ENCODE measurements at regions of chrX and their contacts with region 1.

Region 1: DNA sequence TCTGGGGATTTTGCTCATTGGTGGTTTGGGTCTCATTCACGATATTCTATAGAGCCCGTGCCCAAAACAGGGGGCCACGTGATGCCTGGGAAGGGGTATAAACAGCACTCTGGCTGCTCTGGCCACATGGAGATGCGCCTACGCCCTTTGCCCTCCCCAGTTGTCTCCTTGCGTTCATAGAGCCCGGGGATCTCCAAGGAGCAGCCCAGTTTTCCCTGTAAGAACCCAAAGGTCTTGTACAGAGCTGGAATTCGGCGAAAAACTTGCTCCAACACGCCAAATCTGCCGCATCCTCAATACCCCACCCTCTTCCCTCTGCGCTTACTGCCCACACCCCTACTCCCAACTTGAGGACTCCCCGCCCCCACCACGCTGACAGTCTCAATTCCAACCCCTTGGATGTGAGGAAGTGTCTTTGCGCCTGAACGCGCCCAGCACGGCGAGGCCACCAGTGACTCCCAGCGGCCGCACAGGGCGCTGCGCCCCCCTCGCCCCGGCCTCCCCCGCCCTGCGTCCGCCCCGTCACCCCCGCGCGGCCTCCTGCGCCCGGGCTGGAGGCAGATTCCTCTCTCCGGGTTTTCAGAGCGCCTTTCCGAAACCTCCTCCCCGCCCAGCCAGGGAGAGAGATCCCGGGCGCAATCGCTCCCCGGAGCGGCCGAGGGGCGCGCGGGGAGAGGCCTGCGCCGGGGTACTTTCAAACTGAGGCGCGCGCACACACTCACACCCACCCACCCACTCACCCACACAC is at the start of gene NHS:
- DNase-seq: peak; percentile 80
- ATAC-seq: peak; percentile 91
- total RNA-seq, gene NHS: 2.8 TPM

Region 2: DNA sequence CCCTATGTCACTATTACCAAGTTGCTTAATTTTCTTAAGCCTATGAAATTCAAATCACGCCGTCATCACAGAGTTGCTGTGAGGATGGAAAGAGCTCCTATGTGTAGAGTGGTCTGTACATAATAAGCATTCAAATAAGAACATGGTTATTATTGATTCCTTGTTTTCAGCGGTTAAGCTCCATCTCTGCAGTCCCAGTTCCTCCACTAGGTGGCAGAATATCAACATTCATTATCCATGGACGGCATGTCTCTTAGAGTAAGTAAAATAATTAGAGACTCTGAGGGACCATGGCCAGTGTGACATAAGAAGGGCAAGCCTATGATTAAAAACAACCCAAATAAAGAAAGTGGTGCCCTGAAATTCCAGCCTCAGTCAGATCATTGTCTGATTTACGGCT is 132.3 kb before region 1 on chrX:
- intact Hi-C with region 1: loop called (anchors 10 kb)
- DNase-seq: no peak
- ATAC-seq: no peak

Region 3: GRCh38 chrX:17527135-17527701 is 152.4 kb after region 1 on chrX:
- intact Hi-C with region 1: loop called (anchors 5 kb)
- DNase-seq: peak; percentile 75
- ATAC-seq: peak; percentile 86

Region 4: GRCh38 chrX:17590892-17591740 is 216.3 kb after region 1 on chrX:
- intact Hi-C with region 1: loop called (anchors 5 kb)
- DNase-seq: peak; percentile 59
- ATAC-seq: peak; percentile 89

Region 5: GRCh38 chrX:17608898-17609297 is 234.1 kb after region 1 on chrX:
- intact Hi-C with region 1: no loop called
- DNase-seq: no peak
- ATAC-seq: no peak